GM23248 (cell line): ENCODE measurements at regions of chr1 and their contacts with region 1.

Region 1: GRCh38 chr1:176374967-176375569 is 87.9 kb upstream of the PAPPA2 start:
- DNase-seq: peak; percentile 87
- H3K4me3 ChIP-seq: no peak overlapping the region
- H3K27ac ChIP-seq: no peak overlapping the region
- H3K4me1 ChIP-seq: no peaks in the 10 kb centered on the region
- H3K27me3 ChIP-seq: peaks cover 3% of the 10 kb centered on the region; the same call in 1 of the 2 replicates

Region 2: GRCh38 chr1:175597969-175598765 is 776.9 kb before region 1 on chr1:
- in situ Hi-C with region 1: no loop called
- DNase-seq: peak; percentile 16
- H3K4me3 ChIP-seq: no peak overlapping the region
- H3K27ac ChIP-seq: no peak overlapping the region
- H3K4me1 ChIP-seq: no peaks in the 10 kb centered on the region
- H3K27me3 ChIP-seq: no peaks in the 10 kb centered on the region

Region 3: DNA sequence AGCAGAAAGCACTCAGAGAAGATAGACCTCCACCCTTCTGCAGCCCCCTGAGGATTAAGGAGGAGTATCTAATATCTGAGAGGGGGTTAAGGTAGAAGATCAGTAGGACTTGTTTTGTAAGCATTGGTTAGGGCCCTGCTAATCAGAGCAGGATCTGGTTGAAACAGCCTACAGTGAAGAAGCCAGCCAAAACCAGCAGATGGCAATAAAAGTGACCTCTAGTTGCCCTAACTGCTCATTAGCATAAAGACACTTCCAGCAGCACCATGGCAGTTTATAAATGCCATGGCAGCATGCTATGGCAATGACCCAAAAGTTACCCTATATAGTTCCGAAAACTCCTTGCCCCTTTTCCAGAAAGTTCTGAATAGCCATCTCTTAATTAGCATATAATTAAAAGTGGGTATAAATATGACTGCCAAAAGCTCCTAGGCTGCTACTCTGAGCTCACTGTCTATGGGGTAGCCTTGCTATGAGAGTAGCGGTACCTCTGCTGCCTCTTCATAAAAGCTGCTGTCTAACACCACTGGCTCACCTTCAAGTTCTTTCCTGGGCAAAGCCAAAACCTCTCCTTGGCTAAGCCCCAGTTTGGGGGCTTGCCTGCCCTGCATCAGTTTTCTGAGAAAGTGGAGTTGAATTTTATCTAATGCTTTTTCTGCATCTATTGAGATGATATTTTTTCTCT is 342.1 kb after region 1 on chr1:
- in situ Hi-C with region 1: loop called (anchors 25 kb)
- DNase-seq: no peak
- H3K4me3 ChIP-seq: no peak overlapping the region
- H3K27ac ChIP-seq: no peak overlapping the region
- H3K4me1 ChIP-seq: no peaks in the 10 kb centered on the region
- H3K27me3 ChIP-seq: no peaks in the 10 kb centered on the region

Region 4: GRCh38 chr1:176837708-176838107 is 462.6 kb after region 1 on chr1:
- in situ Hi-C with region 1: loop called (anchors 10 kb)
- DNase-seq: no peak
- H3K4me3 ChIP-seq: no peak overlapping the region
- H3K27ac ChIP-seq: no peak overlapping the region
- H3K4me1 ChIP-seq: no peaks in the 10 kb centered on the region
- H3K27me3 ChIP-seq: no peaks in the 10 kb centered on the region